ENCODE measurements at regions of chr2 and their contacts with region 1.

Region 1: GRCh38 chr2:12931186-12931844 is 214.6 kb downstream of the TRIB2 start:
- DNase-seq: peak in 1 of 6 donors; percentile 25
- ATAC-seq: peak; percentile 55 to 98 (median 91)
- H3K4me3 ChIP-seq: no peak overlapping the region
- H3K27ac ChIP-seq: no peak overlapping the region
- H3K4me1 ChIP-seq: no peaks in the 10 kb centered on the region
- H3K27me3 ChIP-seq: no peaks in the 10 kb centered on the region
- CTCF ChIP-seq: peak; percentile 44 to 77 (median 75)

Region 2: DNA sequence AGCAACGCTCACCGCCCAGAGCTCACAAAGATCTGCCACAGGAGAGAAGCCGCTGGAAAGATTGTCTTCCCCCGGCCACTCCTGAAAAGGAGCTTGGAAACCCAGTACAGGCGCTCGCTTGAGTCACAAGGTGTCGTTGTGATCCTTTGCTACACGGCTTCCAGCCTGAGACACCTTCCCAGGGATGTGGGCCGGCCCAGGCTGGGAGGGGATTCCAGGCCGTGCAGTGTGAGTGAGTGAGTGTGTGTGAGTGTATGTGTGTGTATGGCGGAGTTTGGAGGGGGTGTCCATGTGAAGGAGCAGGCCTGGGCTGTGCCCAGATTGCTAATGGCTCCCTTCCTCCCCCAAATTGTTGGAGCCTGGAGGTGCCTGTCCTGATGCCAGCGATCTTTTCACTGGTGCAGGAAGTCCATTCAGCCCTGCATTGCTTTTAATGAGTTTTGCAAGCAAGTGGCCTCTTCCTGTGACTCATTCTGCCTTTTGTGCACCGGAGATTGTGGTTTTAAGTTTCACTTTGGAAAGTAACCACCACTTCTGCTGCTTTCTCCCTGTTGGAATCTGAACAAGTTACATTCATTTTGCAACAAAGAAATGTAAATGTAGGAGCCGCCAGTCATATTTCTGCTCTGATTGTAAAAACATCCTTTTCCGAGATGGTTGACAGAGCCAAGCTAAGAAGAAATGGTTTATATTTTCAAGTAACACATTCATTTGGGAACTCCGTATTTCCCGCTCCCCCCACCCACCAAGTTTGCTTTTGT is 1101.2 kb before region 1 on chr2:
- intact Hi-C with region 1: loop called in 1 of 3 experiments (anchors 10 kb)
- DNase-seq: peak in 5 of 6 donors; percentile 25 to 72 (median 63)
- ATAC-seq: peak; percentile 67 to 91 (median 88)
- H3K4me3 ChIP-seq: peak overlapping the region in 2 of 4 donors; percentile 6 to 8
- H3K27ac ChIP-seq: peak overlapping the region; percentile 13 to 84 (median 64)
- H3K4me1 ChIP-seq: peaks cover 12 to 22% (median 21%) of the 10 kb centered on the region in 3 donors
- H3K27me3 ChIP-seq: no peaks in the 10 kb centered on the region
- CTCF ChIP-seq: no peak

Region 3: DNA sequence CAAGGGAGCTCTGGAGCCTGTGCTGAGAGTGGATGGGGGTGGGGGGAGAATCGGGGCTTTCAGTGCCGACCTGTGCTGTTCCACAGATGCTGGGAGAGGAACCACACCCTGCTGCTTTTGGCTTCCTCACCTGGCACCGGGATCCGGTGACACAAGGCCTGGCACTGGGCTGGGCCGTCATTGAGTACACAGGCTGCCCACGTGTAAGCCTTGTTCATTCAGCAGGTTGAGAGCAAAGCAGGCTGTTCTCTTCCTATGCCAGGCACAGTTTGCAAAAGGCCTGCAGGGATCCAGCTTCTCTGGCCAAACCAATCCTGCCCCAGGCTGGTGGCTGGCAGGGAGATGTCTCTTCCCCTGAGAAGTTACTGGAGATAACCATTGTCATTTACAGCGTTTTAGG is 197.5 kb before region 1 on chr2:
- intact Hi-C with region 1: loop called in 1 of 3 experiments (anchors 10 kb)
- DNase-seq: peak; percentile 57 to 89 (median 79)
- ATAC-seq: peak; percentile 82 to 95 (median 90)
- H3K4me3 ChIP-seq: no peak overlapping the region
- H3K27ac ChIP-seq: no peak overlapping the region
- H3K4me1 ChIP-seq: peaks cover 3 to 17% (median 5%) of the 10 kb centered on the region in 3 donors
- H3K27me3 ChIP-seq: no peaks in the 10 kb centered on the region
- CTCF ChIP-seq: no peak